ENCODE measurements at regions of chrX and their contacts with region 1.

Region 1: DNA sequence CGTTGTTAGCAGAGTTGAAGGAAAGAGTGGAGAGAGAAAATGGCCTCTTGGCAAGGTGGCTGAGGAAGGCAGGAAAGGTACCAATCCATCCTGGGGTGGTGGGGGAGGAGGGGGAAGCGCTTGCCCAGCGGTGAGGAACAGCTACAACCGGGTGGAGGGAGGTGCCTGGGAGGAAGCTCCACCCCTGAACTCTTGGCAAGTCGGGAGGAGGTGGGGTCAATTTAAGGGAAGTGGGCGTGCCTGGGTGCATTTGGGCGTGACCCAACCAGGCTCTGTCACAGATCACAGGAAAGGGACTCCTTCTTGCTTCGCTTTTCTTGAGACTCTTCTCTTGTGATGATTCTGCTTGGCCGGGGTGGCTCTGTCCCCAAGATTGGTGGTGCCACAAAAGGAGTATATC is 41.7 kb downstream of the BCORL1 start:
- DNase-seq: peak; percentile 80 to 86 (median 84)
- H3K4me3 ChIP-seq: peak overlapping the region in 1 of 3 experiments; percentile 17
- H3K4me3 Mint-ChIP-seq: peak overlapping the region; percentile 55 to 70
- H3K27ac ChIP-seq: peak overlapping the region; percentile 40 to 72
- H3K27ac Mint-ChIP-seq: peak overlapping the region; percentile 82 to 93 (median 90)
- H3K4me1 ChIP-seq: peaks cover 10% of the 10 kb centered on the region in 2 donors
- H3K4me1 Mint-ChIP-seq: peaks cover 14% of the 10 kb centered on the region
- H3K27me3 ChIP-seq: no peaks in the 10 kb centered on the region
- H3K27me3 Mint-ChIP-seq: peaks cover 0 to 6% (median 0%) of the 10 kb centered on the region in 3 donors
- CTCF ChIP-seq: no peak

Region 2: GRCh38 chrX:129925305-129926092 is 98.6 kb before region 1 on chrX:
- intact Hi-C with region 1: loop called (anchors 2 to 5 kb)
- DNase-seq: peak; percentile 71 to 81 (median 74)
- H3K4me3 ChIP-seq: no peak overlapping the region
- H3K4me3 Mint-ChIP-seq: no peak overlapping the region
- H3K27ac ChIP-seq: peak overlapping the region in 1 of 2 donors; percentile 45
- H3K27ac Mint-ChIP-seq: peak overlapping the region; percentile 22 to 89 (median 63)
- H3K4me1 ChIP-seq: peaks cover 7 to 10% of the 10 kb centered on the region in 2 donors
- H3K4me1 Mint-ChIP-seq: peaks cover 14% of the 10 kb centered on the region
- H3K27me3 ChIP-seq: no peaks in the 10 kb centered on the region
- H3K27me3 Mint-ChIP-seq: peaks cover 0 to 7% (median 2%) of the 10 kb centered on the region in 3 donors
- CTCF ChIP-seq: peak; percentile 59

Region 3: DNA sequence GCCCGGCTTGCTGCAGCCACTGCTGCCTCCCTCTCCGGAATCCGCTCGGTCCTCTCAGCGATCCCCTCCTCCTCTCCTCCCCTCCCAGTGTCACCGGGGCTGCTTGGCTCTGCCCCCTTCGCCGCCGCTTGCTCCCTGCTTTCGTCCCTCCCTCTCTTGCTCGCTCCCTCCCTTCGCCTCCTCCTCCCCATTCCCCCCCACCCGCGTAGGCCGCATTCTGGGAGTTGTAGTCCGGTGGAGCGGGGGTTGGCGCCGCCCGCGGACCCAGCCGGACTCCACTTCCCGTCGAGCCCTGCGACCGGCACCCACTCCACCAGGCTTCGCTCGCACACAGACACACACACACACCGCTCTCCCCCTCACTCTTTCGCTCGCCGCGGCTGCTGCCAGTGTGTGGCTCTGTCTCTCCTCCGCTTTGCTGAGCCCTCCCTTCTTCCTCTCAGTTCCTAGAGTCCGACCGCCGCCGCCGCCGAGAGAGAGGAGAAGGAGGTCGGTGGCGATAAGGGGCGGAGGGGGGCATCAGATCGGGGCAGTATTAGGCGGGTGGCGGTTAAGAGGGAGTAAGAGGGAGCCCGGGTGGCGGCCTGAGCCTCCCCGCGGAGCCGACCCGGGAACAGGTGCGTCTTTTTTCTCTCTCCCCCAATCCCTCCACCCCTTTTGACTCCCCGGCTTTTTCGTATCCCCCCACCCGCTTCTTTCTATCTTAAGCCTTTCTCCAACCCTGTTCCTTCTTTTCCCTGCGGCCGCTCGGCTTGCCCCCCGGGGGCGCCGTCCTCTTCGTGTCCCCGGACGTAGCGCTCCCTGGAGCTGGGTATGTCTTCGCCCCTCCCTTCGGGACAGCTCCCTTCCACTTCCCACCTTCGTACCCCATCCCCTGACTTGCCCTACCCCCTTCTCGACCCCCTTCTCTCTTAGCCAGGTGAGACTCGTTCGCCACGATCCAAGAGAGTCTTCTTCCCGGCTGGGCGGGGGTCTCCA is 41.6 kb before region 1 on chrX and contains the start of gene BCORL1:
- intact Hi-C with region 1: loop called in 1 of 2 experiments (anchors 2 kb)
- DNase-seq: peak; percentile 68 to 87 (median 79)
- H3K4me3 ChIP-seq: peak within 1 kb of the TSS in 1 of 3 experiments; percentile 71
- H3K4me3 Mint-ChIP-seq: no peak within 1 kb of the TSS
- H3K27ac ChIP-seq: peak within 1 kb of the TSS; percentile 48 to 49
- H3K27ac Mint-ChIP-seq: peak within 1 kb of the TSS in 6 of 7 donors; percentile 48 to 88 (median 80)
- H3K4me1 ChIP-seq: peaks cover 11 to 15% of the 10 kb centered on the region in 2 donors
- H3K4me1 Mint-ChIP-seq: peaks cover 24% of the 10 kb centered on the region
- H3K27me3 ChIP-seq: no peaks in the 10 kb centered on the region
- H3K27me3 Mint-ChIP-seq: peaks cover 4 to 17% (median 7%) of the 10 kb centered on the region in 3 donors
- CTCF ChIP-seq: no peak
- polyA plus RNA-seq, gene BCORL1: 0.69 to 2.4 (median 0.72) TPM